ENCODE measurements at regions of chr10 and their contacts with region 1.

Region 1: DNA sequence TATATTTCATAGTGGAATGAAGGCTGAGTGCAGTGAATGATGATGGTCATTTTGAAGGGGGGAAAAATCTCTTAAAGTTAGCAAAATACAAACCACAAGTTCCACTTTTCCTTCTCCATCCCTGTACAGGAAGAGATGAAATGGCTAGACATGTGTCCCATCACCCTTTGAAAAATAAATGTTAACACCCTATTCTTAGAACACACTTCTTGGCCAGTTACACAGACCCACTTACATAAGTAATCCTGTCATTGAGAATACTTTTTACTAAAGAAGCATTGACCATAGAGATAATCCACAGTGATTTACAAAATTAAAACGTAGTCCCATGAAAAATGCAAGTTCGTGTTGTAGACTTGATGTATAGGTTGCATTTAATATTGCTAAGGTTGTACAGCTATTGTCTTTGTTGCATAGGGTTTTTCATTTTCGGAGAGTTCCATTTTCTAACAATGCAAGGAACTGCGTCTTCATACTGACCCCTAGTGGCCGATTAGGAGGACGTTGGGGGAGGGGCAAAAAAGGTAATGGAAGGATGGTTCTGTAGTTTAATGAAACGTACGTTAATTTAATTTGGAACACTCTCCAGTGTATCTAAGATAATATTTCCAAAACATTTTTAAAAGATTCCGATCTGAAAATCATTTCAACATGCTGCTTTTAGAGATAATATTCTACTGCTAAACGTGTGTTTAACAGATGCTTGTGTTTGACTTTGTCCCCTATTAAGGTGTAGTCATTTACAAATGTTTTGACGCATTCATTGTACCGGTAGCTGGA is 60.9 kb downstream of the ARMC3 start:
- DNase-seq: peak; percentile 56
- H3K4me3 ChIP-seq: no peak overlapping the region
- H3K27ac ChIP-seq: no peak overlapping the region
- H3K4me1 ChIP-seq: no peaks in the 10 kb centered on the region
- H3K27me3 ChIP-seq: peaks cover 6% of the 10 kb centered on the region
- CTCF ChIP-seq: peak; percentile 87 to 96 (median 91)
- EP300 ChIP-seq: no peak
- POLR2A ChIP-seq: no peak

Region 2: GRCh38 chr10:21989453-21990154 is 999.2 kb before region 1 on chr10:
- in situ Hi-C with region 1: loop called in 3 of 4 experiments (anchors 10 kb)
- intact Hi-C with region 1: no loop called
- DNase-seq: peak; percentile 39
- H3K4me3 ChIP-seq: no peak overlapping the region
- H3K27ac ChIP-seq: peak overlapping the region in 1 of 4 donors; percentile 25
- H3K4me1 ChIP-seq: peaks cover 0 to 10% (median 3%) of the 10 kb centered on the region in 4 donors
- H3K27me3 ChIP-seq: no peaks in the 10 kb centered on the region
- CTCF ChIP-seq: peak in 4 of 5 experiments; percentile 36 to 52 (median 42)
- EP300 ChIP-seq: no peak
- POLR2A ChIP-seq: no peak

Region 3: DNA sequence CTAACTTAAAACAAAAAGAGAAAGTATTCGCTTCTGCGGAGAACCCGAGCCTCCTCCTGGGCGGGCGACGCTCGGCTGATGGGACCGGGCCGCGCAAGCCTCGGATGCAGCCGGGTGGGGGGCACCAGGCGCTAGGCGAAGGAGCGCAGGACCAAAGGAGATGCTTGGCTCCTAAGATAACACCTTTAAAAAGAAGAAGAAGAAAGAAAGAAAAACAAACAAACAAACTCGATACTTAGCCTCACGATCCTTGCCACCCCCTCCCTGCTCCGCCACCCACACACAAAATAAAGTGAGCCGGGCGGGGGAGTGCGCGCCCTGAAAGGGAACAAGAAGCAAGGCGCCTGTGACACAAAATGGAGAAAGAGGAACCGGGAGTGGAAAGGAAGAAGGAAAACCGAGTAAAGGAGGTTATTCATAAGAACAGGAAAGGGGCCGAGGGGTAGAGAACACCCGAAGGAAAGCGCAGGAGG is 737.0 kb before region 1 on chr10:
- in situ Hi-C with region 1: loop called in 2 of 4 experiments (anchors 25 kb)
- intact Hi-C with region 1: no loop called
- DNase-seq: peak; percentile 55
- H3K4me3 ChIP-seq: peak overlapping the region; percentile 28 to 92 (median 60)
- H3K27ac ChIP-seq: peak overlapping the region; percentile 83 to 96 (median 90)
- H3K4me1 ChIP-seq: peaks cover 0 to 26% (median 4%) of the 10 kb centered on the region in 4 donors
- H3K27me3 ChIP-seq: peaks cover 49% of the 10 kb centered on the region
- CTCF ChIP-seq: no peak
- EP300 ChIP-seq: no peak
- POLR2A ChIP-seq: peak; percentile 46

Region 4: DNA sequence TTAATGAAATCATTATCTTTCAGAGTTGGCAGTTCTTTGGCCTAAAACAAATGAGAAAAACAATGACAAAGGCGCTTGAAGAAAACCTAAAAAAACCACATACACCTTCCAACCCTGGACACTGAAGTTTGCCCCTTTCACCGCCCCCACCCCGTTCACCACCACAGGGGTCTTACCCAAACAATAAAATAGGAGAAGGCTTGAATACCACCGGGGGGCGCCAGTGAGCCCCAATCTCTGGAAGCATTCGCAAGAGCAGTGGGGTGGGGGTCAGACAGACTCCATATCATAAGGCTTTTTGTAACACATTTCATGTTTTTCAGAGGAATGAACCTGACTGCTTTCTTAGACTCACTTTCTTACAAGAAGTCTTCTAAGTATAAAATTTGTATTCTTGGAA is 438.0 kb before region 1 on chr10:
- in situ Hi-C with region 1: loop called in 2 of 4 experiments (anchors 10 to 25 kb)
- intact Hi-C with region 1: no loop called
- DNase-seq: peak; percentile 44
- H3K4me3 ChIP-seq: no peak overlapping the region
- H3K27ac ChIP-seq: no peak overlapping the region
- H3K4me1 ChIP-seq: no peaks in the 10 kb centered on the region
- H3K27me3 ChIP-seq: no peaks in the 10 kb centered on the region
- CTCF ChIP-seq: peak; percentile 39 to 55 (median 52)
- EP300 ChIP-seq: no peak
- POLR2A ChIP-seq: no peak

Region 5: DNA sequence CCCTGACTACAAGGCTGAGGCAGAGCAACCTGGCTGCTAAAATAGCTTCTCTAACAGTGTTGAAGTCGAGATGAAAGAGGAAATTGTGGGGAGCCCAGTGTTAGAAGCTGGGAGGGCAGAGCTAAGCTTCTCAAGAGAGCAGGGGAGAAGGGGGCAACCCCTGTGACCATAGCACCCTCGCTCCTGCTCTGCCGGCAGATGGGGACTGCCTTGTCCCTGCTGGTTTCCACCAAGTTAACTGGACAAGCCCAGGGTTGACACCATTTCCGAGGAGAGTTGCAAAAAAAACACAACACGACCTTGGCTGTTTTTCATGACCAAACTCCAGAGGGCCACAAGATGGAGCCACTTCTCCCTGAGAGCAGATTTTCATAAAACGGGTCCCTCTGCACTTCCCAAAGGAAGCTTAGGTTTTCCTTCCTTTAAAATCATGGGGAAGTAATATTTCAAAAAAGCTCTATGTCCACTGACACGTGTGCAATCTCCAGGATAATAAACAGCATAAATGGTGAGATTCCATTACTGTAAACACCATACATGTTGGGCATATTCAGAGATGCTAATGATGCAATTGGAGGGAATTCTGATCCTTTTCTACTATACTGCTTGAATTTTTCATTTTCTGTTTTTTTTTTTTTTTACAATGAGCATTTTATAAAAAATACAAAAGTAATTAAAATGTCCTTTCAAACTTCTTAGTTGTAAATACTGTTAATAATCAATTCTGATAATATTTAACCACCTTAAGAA is 414.8 kb before region 1 on chr10:
- in situ Hi-C with region 1: loop called in 2 of 4 experiments (anchors 25 kb)
- intact Hi-C with region 1: loop called (anchors 5 kb)
- DNase-seq: no peak
- H3K4me3 ChIP-seq: no peak overlapping the region
- H3K27ac ChIP-seq: no peak overlapping the region
- H3K4me1 ChIP-seq: no peaks in the 10 kb centered on the region
- H3K27me3 ChIP-seq: no peaks in the 10 kb centered on the region
- CTCF ChIP-seq: peak; percentile 13 to 32 (median 22)
- EP300 ChIP-seq: no peak
- POLR2A ChIP-seq: no peak

Region 6: GRCh38 chr10:22597138-22597537 is 391.6 kb before region 1 on chr10:
- in situ Hi-C with region 1: loop called in 1 of 4 experiments (anchors 25 kb)
- intact Hi-C with region 1: no loop called
- DNase-seq: peak; percentile 19
- H3K4me3 ChIP-seq: no peak overlapping the region
- H3K27ac ChIP-seq: peak overlapping the region in 1 of 4 donors; percentile 32
- H3K4me1 ChIP-seq: peaks cover 0 to 10% (median 0%) of the 10 kb centered on the region in 4 donors
- H3K27me3 ChIP-seq: no peaks in the 10 kb centered on the region
- CTCF ChIP-seq: no peak
- EP300 ChIP-seq: no peak
- POLR2A ChIP-seq: no peak

Region 7: GRCh38 chr10:22856444-22857074 is 132.2 kb before region 1 on chr10:
- in situ Hi-C with region 1: no loop called
- intact Hi-C with region 1: no loop called
- DNase-seq: no peak
- H3K4me3 ChIP-seq: no peak overlapping the region
- H3K27ac ChIP-seq: no peak overlapping the region
- H3K4me1 ChIP-seq: no peaks in the 10 kb centered on the region
- H3K27me3 ChIP-seq: no peaks in the 10 kb centered on the region
- CTCF ChIP-seq: no peak
- EP300 ChIP-seq: no peak
- POLR2A ChIP-seq: no peak

Region 8: DNA sequence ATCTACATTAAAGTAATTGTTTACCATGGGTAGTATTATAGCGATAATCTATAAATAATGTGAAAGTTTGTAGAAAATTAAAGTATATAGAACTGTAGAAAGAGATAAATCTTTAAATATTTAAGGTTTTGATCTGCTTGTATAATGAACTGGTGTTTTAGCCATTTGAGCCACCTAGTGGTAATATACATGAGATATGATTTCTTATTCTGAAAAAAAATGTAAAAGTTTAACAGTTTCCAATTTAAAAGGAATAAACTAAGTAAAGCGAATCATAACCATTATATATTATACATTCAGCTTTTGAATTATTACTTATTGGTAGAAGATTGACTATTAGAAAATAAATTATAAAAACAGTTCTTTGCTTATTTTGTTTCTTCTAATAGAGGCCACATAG is 541.3 kb after region 1 on chr10:
- in situ Hi-C with region 1: no loop called
- intact Hi-C with region 1: no loop called
- DNase-seq: no peak
- H3K4me3 ChIP-seq: no peak overlapping the region
- H3K27ac ChIP-seq: no peak overlapping the region
- H3K4me1 ChIP-seq: no peaks in the 10 kb centered on the region
- H3K27me3 ChIP-seq: no peaks in the 10 kb centered on the region
- CTCF ChIP-seq: peak in 3 of 5 experiments; percentile 19 to 41 (median 23)
- EP300 ChIP-seq: no peak
- POLR2A ChIP-seq: no peak